ENCODE measurements at regions of chr19 and their contacts with region 1.

Region 1: DNA sequence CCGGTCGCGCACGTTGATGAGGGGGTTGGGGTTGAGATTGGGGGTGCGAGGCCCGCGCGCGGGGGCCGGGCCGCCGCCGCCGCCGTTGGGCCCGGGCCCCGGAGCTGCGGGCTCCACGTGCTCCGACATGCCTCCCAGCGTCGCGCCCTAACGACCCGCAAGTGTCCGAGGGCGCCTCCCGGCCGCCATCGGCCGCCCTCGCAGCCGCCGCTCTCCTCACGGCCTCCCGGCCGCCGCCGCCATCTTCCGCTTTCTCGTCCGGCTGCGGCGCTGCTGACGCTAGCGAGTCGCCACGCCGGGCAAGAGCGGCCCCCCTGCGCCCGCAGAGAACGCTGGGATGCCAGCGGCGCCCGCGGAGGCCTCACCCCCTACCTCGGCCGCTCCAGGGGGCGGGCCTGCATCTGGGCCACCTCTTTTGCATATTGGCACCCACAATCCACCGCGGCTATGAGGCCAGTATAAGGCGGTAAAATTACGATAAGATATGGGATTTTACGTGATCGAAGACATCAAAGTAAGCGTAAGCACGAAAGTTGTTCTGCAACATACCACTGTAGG is at the start of gene TMEM259:
- DNase-seq: peak; percentile 94 to 99 (median 98)
- ATAC-seq: peak; percentile 84
- H3K4me3 ChIP-seq: peak within 1 kb of the TSS; percentile 94
- H3K4me3 Mint-ChIP-seq: peak within 1 kb of the TSS; percentile 98
- H3K27ac ChIP-seq: peak within 1 kb of the TSS; percentile 96 to 99
- H3K27ac Mint-ChIP-seq: peak within 1 kb of the TSS; percentile 99
- H3K4me1 ChIP-seq: peaks cover 66% of the 10 kb centered on the region
- H3K4me1 Mint-ChIP-seq: peaks cover 33% of the 10 kb centered on the region
- H3K27me3 ChIP-seq: no peaks in the 10 kb centered on the region
- H3K27me3 Mint-ChIP-seq: peaks cover 7% of the 10 kb centered on the region
- CTCF ChIP-seq: no peak
- total RNA-seq, gene TMEM259: 388 to 390 TPM

Region 2: GRCh38 chr19:566403-566802 is 454.5 kb before region 1 on chr19:
- CTCF ChIA-PET with region 1: no interaction called
- POLR2A ChIA-PET with region 1: no interaction called
- intact Hi-C with region 1: no loop called
- DNase-seq: peak in 2 of 14 experiments; percentile 44 to 57
- ATAC-seq: no peak
- H3K4me3 ChIP-seq: no peak overlapping the region
- H3K4me3 Mint-ChIP-seq: no peak overlapping the region
- H3K27ac ChIP-seq: no peak overlapping the region
- H3K27ac Mint-ChIP-seq: no peak overlapping the region
- H3K4me1 ChIP-seq: peaks cover 12% of the 10 kb centered on the region
- H3K4me1 Mint-ChIP-seq: peaks cover 12% of the 10 kb centered on the region
- H3K27me3 ChIP-seq: no peaks in the 10 kb centered on the region
- H3K27me3 Mint-ChIP-seq: no peaks in the 10 kb centered on the region
- CTCF ChIP-seq: no peak

Region 3: DNA sequence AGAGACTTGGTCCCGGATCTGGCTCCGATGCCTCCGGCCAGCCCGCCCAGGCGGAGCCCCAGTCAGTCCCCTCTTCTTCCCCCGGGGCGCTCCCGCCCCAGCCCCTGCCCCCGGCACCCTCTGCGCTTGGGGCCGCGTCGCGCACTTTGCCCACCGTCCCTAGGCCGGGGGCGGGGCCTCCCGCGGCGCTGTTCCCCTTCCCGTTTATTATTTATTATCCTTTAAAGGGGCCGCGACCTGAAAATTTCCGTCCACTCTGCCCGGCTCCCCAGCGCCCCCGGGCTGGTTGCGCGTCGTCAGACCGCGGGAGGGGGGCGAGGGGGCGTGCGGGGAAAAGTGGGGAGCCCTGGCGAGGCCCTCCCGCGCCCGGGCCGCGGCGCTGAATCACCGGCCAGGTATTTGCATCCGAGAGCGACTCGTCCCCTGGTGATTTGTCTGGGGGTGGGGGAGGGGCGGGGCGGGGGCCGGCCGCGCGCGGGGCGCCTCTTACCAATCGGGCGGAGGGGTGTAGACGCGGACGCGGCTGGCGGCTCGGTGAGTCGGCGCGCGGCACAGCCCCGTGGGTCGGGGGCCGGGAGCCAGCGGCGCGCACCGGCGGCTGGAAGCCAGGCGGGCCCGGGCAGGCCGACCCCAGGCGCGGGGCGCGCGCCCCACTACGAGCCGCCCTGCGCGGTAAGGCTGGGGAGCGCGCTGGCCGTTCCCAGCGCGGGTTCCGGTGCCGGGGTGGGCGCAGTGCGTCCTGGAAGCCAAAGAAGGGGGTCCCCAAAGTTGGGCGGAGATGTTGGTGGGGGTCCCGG is 95.2 kb before region 1 on chr19 and contains the start of gene ARID3A:
- CTCF ChIA-PET with region 1: no interaction called
- POLR2A ChIA-PET with region 1: no interaction called
- intact Hi-C with region 1: no loop called
- DNase-seq: peak; percentile 55 to 87 (median 72)
- ATAC-seq: peak; percentile 66
- H3K4me3 ChIP-seq: peak within 1 kb of the TSS; percentile 83
- H3K4me3 Mint-ChIP-seq: peak within 1 kb of the TSS; percentile 86
- H3K27ac ChIP-seq: peak within 1 kb of the TSS in 1 of 2 donors; percentile 60
- H3K27ac Mint-ChIP-seq: peak within 1 kb of the TSS; percentile 36
- H3K4me1 ChIP-seq: peaks cover 44% of the 10 kb centered on the region
- H3K4me1 Mint-ChIP-seq: peaks cover 15% of the 10 kb centered on the region
- H3K27me3 ChIP-seq: no peaks in the 10 kb centered on the region
- H3K27me3 Mint-ChIP-seq: no peaks in the 10 kb centered on the region
- CTCF ChIP-seq: no peak
- total RNA-seq, gene ARID3A: 3.7 to 4.1 TPM

Region 4: DNA sequence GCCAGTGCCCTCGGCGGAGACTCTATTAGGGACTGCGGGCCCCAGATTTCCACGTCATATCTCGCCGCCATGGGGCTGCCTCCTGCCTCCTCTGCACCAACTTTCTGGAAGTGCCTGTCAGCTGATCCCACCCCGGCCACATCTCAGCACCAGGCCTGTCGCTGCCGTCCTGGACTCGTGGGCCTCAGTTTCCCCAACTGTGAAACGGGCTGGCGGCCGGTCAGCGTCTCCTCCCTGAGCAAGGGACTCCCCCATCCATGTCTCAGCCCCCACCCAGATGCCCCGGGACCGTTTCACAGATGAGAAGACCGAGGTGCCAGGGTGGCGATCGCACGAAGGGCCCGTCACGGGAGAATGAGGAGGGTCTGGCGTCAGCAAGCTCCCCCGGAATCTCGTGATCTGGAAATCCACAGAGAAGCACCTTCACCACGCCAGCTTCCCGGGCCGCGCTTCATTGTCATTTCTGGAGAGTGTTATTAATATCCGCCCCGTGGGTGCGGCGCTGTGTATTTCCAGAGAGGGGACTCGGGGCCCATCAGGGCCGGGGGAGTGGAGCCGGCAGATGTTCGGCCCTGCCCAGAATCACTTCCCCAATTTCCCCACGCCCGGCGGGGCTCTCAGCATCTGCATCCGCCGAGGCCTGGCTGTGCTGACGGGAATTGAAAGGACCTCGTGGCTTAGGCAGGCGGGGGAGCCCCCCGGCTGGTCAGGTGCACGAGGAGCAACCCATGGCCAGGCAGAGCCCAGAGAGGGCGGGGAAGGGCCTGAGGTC is 73.5 kb before region 1 on chr19:
- CTCF ChIA-PET with region 1: no interaction called
- POLR2A ChIA-PET with region 1: no interaction called
- intact Hi-C with region 1: no loop called
- DNase-seq: peak in 3 of 14 experiments; percentile 41 to 77 (median 69)
- ATAC-seq: no peak
- H3K4me3 ChIP-seq: no peak overlapping the region
- H3K4me3 Mint-ChIP-seq: no peak overlapping the region
- H3K27ac ChIP-seq: no peak overlapping the region
- H3K27ac Mint-ChIP-seq: no peak overlapping the region
- H3K4me1 ChIP-seq: peaks cover 5% of the 10 kb centered on the region
- H3K4me1 Mint-ChIP-seq: no peaks in the 10 kb centered on the region
- H3K27me3 ChIP-seq: no peaks in the 10 kb centered on the region
- H3K27me3 Mint-ChIP-seq: no peaks in the 10 kb centered on the region
- CTCF ChIP-seq: no peak

Region 5: DNA sequence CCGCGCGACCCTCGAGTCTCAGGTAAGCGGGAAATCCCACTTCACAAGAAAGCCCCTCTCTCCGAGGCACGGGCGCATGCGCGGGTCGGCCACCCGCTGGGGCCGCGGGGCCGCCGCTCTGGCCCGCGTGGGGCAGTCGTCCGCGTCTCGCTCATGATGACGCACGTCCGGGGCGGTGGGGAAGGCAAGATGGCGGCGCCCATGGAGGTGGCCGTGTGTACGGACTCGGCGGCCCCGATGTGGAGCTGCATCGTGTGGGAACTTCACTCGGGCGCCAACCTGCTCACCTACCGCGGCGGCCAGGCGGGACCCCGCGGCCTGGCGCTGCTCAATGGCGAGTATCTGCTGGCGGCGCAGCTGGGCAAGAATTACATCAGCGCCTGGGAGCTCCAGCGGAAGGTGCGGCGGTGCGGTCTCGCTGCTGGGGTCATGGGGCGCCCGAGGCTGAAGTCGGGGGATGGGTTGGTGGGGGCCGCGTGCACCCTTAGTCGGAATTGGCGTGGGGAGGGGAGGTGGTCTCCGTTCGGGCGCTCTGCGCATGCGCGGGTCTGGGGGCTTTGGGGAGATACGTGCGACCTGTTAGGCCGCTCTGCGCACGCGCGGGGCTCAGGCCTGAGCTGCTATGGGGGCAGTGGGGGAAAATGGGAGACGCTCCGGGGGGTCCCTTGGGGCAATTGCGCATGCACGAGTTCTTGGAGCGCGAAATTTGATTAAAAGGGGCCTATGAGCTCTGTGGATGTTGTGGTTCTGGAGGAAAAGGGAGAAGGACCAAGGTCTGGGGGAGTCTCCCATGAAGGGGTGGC is 36.6 kb before region 1 on chr19 and contains the start of gene WDR18:
- CTCF ChIA-PET with region 1: no interaction called
- POLR2A ChIA-PET with region 1: interaction called, 10 read pairs
- intact Hi-C with region 1: no loop called
- DNase-seq: peak; percentile 71 to 94 (median 84)
- ATAC-seq: peak; percentile 90
- H3K4me3 ChIP-seq: peak within 1 kb of the TSS; percentile 96
- H3K4me3 Mint-ChIP-seq: peak within 1 kb of the TSS; percentile 94
- H3K27ac ChIP-seq: peak within 1 kb of the TSS; percentile 72 to 75
- H3K27ac Mint-ChIP-seq: peak within 1 kb of the TSS; percentile 78
- H3K4me1 ChIP-seq: peaks cover 34% of the 10 kb centered on the region
- H3K4me1 Mint-ChIP-seq: peaks cover 15% of the 10 kb centered on the region
- H3K27me3 ChIP-seq: no peaks in the 10 kb centered on the region
- H3K27me3 Mint-ChIP-seq: no peaks in the 10 kb centered on the region
- CTCF ChIP-seq: no peak
- total RNA-seq, gene WDR18: 16.8 to 17.1 TPM

Region 6: DNA sequence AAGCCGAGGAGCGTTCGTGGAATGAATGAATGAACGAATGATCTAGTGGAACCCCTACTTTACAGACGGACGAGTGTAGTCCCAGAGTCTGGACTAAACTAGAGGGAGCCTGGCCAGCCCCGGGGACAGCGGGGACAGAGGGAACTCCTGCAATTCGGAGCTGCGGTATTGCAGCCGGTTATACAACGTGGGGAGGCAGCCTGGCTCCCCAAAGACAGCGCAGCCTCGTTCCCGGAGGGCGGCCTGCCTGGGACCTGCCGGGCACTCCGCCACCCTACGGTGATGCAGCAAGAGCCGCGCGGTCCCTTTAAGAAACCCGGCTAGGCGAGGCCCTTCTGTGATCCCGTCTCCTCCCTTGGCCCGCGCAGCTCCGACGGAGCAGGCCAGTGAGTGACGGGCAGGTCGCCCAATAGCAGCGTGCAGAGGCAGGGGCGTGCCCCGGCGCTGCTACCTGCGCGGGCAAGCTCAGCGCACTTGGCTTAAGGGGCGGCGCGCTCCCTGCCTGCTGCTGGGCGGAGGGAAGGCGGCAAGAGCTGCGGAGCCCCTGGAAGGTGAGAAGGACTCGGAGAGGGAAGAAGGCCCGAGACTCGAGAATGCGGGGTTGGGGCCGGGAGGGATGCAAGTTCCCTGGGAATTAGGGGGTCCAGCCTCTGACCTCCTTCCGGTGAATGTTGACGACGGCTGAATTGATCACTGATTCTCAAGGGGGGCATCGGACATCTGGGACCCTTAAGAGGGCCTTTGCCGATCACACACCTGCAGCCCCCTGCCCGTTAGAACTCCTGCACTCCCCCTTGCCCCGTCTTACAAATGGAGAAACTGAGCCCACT is 18.9 kb after region 1 on chr19 and contains the start of gene ABCA7:
- CTCF ChIA-PET with region 1: interaction called, 20 read pairs
- POLR2A ChIA-PET with region 1: interaction called, 203 read pairs
- intact Hi-C with region 1: loop called (anchors 1 to 2 kb)
- DNase-seq: peak; percentile 99 to 100 (median 99)
- ATAC-seq: peak; percentile 90
- H3K4me3 ChIP-seq: peak within 1 kb of the TSS; percentile 91
- H3K4me3 Mint-ChIP-seq: peak within 1 kb of the TSS; percentile 100
- H3K27ac ChIP-seq: peak within 1 kb of the TSS; percentile 43 to 51
- H3K27ac Mint-ChIP-seq: peak within 1 kb of the TSS; percentile 92
- H3K4me1 ChIP-seq: peaks cover 81% of the 10 kb centered on the region
- H3K4me1 Mint-ChIP-seq: peaks cover 51% of the 10 kb centered on the region
- H3K27me3 ChIP-seq: no peaks in the 10 kb centered on the region
- H3K27me3 Mint-ChIP-seq: no peaks in the 10 kb centered on the region
- CTCF ChIP-seq: no peak
- total RNA-seq, gene ABCA7: 114 to 118 TPM

Region 7: GRCh38 chr19:1074544-1075283 is 53.8 kb after region 1 on chr19:
- CTCF ChIA-PET with region 1: interaction called, 4 read pairs
- POLR2A ChIA-PET with region 1: interaction called, 186 read pairs
- intact Hi-C with region 1: loop called (anchors 2 to 5 kb)
- DNase-seq: peak; percentile 95 to 100 (median 97)
- ATAC-seq: peak; percentile 25
- H3K4me3 ChIP-seq: peak overlapping the region; percentile 48
- H3K4me3 Mint-ChIP-seq: peak overlapping the region; percentile 87
- H3K27ac ChIP-seq: peak overlapping the region; percentile 52 to 96
- H3K27ac Mint-ChIP-seq: peak overlapping the region; percentile 98
- H3K4me1 ChIP-seq: peaks cover 89% of the 10 kb centered on the region
- H3K4me1 Mint-ChIP-seq: peaks cover 53% of the 10 kb centered on the region
- H3K27me3 ChIP-seq: no peaks in the 10 kb centered on the region
- H3K27me3 Mint-ChIP-seq: peaks cover 4% of the 10 kb centered on the region
- CTCF ChIP-seq: no peak

Region 8: DNA sequence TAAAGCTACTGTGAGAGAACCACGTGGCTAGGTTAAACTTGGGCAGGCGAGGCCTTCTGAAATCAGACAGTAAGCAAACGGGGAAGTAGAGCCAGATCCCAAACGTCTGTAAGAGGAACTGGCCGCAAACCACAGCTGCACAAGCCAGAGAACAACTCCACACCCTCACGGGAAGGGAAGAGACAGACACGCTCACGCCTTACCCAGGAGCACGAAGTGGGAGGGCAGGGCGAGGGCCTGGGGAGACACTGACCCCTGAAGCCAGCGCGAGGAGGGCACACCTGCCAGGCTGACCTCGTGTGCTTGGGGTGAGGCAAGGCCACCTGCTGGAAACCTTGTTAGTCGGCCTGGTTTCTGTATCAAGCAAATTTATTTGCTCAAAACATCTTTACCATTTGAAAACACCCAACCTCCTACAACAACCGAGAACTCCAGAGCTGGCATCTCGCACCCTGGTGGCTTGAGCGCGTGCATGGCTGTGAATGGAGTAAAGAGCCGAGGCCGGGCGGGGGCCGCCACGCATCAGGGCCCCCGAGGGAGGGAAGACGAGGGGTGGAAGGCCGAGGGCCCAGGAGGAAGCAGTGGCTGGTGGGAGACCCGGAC is 67.0 kb after region 1 on chr19:
- CTCF ChIA-PET with region 1: interaction called, 3 read pairs
- POLR2A ChIA-PET with region 1: interaction called, 186 read pairs
- intact Hi-C with region 1: no loop called
- DNase-seq: peak in 10 of 14 experiments; percentile 44 to 87 (median 63)
- ATAC-seq: peak; percentile 58
- H3K4me3 ChIP-seq: no peak overlapping the region
- H3K4me3 Mint-ChIP-seq: peak overlapping the region; percentile 71
- H3K27ac ChIP-seq: peak overlapping the region; percentile 59 to 68
- H3K27ac Mint-ChIP-seq: peak overlapping the region; percentile 82
- H3K4me1 ChIP-seq: peaks cover 77% of the 10 kb centered on the region
- H3K4me1 Mint-ChIP-seq: peaks cover 27% of the 10 kb centered on the region
- H3K27me3 ChIP-seq: no peaks in the 10 kb centered on the region
- H3K27me3 Mint-ChIP-seq: no peaks in the 10 kb centered on the region
- CTCF ChIP-seq: peak; percentile 5

Region 9: DNA sequence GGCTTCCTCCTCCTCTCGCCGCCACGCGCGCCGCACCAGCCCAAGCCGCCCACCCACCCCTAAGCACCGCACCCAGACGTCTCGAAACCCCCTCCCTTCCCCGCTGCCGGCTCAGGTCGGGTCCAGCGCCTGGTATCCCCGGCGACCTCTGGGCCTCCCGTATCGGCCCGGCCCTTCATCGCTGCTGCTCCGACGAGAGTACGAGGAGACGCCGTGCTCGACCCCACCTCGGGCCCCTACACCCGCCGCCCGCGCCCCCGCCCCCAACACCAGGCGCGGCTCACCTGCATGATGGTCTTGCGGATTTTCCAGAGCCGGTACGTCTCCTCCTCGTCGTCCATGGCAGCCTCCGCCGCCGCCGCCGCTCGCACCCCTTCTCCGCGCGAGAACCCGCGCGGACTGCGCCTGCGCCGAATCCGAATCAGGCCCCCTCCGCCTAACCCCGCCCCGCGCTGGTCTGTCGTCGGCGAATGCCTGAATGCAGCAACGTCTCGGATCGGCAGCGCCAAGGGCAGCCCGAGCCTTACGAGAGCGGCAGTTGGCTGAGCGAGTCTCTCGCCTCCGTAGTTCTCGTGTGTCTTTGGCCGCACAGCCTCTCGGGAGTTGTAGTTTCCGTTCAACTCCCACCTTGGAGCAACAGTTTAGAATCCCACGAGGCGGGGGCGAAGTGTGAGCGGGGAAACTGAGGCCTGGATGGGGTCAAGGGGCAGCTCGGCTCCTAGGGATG is 74.2 kb after region 1 on chr19 and contains the start of gene POLR2E:
- CTCF ChIA-PET with region 1: no interaction called
- POLR2A ChIA-PET with region 1: interaction called, 186 read pairs
- intact Hi-C with region 1: loop called in 1 of 2 experiments (anchors 5 kb)
- DNase-seq: peak; percentile 97 to 100 (median 98)
- ATAC-seq: peak; percentile 90
- H3K4me3 ChIP-seq: peak within 1 kb of the TSS; percentile 89
- H3K4me3 Mint-ChIP-seq: peak within 1 kb of the TSS; percentile 94
- H3K27ac ChIP-seq: peak within 1 kb of the TSS; percentile 65 to 90
- H3K27ac Mint-ChIP-seq: peak within 1 kb of the TSS; percentile 84
- H3K4me1 ChIP-seq: peaks cover 61% of the 10 kb centered on the region
- H3K4me1 Mint-ChIP-seq: peaks cover 41% of the 10 kb centered on the region
- H3K27me3 ChIP-seq: no peaks in the 10 kb centered on the region
- H3K27me3 Mint-ChIP-seq: no peaks in the 10 kb centered on the region
- CTCF ChIP-seq: no peak
- total RNA-seq, gene POLR2E: 45.8 to 49.0 TPM

Region 10: GRCh38 chr19:1249298-1249989 is 228.5 kb after region 1 on chr19:
- CTCF ChIA-PET with region 1: interaction called, 6 read pairs
- POLR2A ChIA-PET with region 1: interaction called, 5 read pairs
- intact Hi-C with region 1: loop called in 1 of 2 experiments (anchors 10 kb)
- DNase-seq: peak; percentile 90 to 99 (median 96)
- ATAC-seq: peak; percentile 55
- H3K4me3 ChIP-seq: peak overlapping the region; percentile 71
- H3K4me3 Mint-ChIP-seq: peak overlapping the region; percentile 97
- H3K27ac ChIP-seq: peak overlapping the region; percentile 69 to 86
- H3K27ac Mint-ChIP-seq: peak overlapping the region; percentile 92
- H3K4me1 ChIP-seq: peaks cover 55% of the 10 kb centered on the region
- H3K4me1 Mint-ChIP-seq: peaks cover 10% of the 10 kb centered on the region
- H3K27me3 ChIP-seq: no peaks in the 10 kb centered on the region
- H3K27me3 Mint-ChIP-seq: no peaks in the 10 kb centered on the region
- CTCF ChIP-seq: no peak

Region 11: GRCh38 chr19:1336079-1336684 is 315.2 kb after region 1 on chr19:
- CTCF ChIA-PET with region 1: no interaction called
- POLR2A ChIA-PET with region 1: no interaction called
- intact Hi-C with region 1: no loop called
- DNase-seq: no peak
- ATAC-seq: no peak
- H3K4me3 ChIP-seq: no peak overlapping the region
- H3K4me3 Mint-ChIP-seq: no peak overlapping the region
- H3K27ac ChIP-seq: no peak overlapping the region
- H3K27ac Mint-ChIP-seq: no peak overlapping the region
- H3K4me1 ChIP-seq: no peaks in the 10 kb centered on the region
- H3K4me1 Mint-ChIP-seq: no peaks in the 10 kb centered on the region
- H3K27me3 ChIP-seq: peaks cover 0 to 3% of the 10 kb centered on the region in 2 experiments
- H3K27me3 Mint-ChIP-seq: peaks cover 4% of the 10 kb centered on the region
- CTCF ChIP-seq: no peak